ENCODE measurements at regions of chr3 and their contacts with region 1.

Region 1: DNA sequence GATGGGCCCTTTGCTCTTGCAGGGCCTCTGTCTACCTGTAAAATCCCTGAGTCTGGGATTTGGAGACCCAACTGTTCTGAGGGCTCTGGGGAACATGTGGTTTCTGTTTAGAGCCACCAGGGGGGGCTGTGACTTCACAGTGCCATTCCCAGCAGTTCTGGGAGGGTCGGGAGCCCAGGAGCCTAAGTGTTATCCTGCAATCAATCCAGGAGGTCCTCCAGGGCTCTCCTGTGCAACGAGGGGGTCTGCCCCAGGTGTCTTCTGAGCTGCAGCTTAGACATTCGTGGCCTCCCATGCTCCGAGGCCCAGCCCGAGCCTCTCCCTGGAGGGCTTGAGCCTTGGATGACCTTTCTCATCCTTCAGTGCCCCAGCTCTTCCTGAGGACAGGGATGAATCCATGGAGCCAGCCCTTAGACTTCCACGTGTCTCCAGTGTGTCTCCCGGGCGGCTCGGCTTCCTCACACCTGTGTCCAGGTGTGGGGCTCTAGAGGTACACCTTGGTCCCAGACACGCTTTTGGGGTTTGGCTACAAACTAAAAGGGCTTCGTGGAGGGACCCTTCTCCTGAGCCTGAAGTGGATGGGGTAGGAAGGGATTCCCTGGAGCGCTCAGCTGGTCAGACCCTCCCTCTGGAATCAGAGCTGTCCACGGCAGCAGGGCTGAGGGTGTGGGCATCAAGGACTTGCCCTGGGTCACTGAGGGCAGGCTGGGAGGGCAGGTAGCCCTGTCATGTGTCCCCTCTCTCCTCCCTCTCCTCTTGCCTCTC is 20.3 kb upstream of the ABTB1 start:
- DNase-seq: no peak
- H3K4me3 ChIP-seq: no peak overlapping the region
- H3K27me3 ChIP-seq: peaks cover 1% of the 10 kb centered on the region; the same call in 1 of the 2 replicates
- CTCF ChIP-seq: peak; percentile 90

Region 2: GRCh38 chr3:127632021-127632774 is 20.2 kb before region 1 on chr3:
- CTCF ChIA-PET with region 1: interaction called, 10 read pairs
- POLR2A ChIA-PET with region 1: no interaction called
- DNase-seq: no peak
- H3K4me3 ChIP-seq: no peak overlapping the region
- H3K27me3 ChIP-seq: peaks cover 34% of the 10 kb centered on the region
- CTCF ChIP-seq: no peak

Region 3: DNA sequence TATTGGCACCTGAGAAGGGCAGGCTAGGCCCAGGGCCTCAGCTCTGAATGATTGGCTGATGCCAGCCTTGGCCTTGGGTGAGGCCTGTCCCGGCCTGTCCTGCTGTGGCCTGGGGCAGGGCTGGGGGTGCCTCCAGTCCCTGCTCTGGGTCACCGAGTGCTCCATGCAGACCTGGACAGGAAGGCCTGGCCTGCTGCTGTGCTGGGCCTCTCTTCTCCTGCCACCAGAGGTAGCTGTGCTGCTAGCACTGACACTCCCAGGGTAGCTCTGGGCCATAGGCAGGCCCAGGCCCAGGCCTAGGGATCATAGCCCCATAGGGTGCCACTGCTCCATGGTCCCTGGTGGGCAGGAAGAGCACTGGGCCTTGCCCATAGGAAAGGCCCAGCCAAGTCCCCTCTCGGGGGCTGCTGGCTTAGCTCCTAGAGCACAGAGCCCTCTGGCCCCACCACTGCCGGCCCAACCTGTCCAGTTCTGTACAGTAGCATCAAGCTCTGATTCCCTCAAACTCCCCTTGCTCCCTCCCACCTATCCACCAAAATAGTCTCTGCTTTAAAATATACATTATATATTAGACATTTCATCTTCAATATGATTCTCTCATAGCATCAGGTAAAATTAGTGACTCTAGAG is 38.5 kb after region 1 on chr3:
- CTCF ChIA-PET with region 1: interaction called, 13 read pairs
- POLR2A ChIA-PET with region 1: no interaction called
- DNase-seq: no peak
- H3K4me3 ChIP-seq: no peak overlapping the region
- H3K27me3 ChIP-seq: no peaks in the 10 kb centered on the region
- CTCF ChIP-seq: peak; percentile 91

Region 4: DNA sequence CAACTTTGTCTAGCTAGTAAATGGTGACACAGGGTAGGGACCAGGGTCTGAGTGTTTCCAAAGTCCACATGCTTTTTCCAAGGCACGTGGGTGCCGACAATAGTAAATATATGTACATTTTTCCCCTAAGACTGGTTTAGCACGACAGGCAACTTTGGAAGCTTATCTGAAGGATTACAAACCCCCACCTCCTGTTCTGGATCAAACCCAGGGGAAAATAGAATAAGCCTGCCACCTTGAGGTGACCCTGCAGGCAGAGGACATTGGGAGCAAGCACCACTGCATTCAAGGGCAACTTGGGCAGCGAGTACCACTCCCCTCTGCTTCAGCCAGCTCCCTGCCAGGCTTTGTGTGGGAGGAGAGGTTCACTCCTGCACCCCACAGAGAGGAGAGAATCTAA is 307.4 kb after region 1 on chr3:
- CTCF ChIA-PET with region 1: interaction called, 26 read pairs
- POLR2A ChIA-PET with region 1: no interaction called
- DNase-seq: no peak
- H3K4me3 ChIP-seq: no peak overlapping the region
- H3K27me3 ChIP-seq: no peaks in the 10 kb centered on the region; the same call in 1 of the 2 replicates
- CTCF ChIP-seq: peak; percentile 35; the same call in 1 of the 2 replicates

Measured in BJ (cell line).